ENCODE measurements at regions of chr19 and their contacts with region 1.

Region 1: DNA sequence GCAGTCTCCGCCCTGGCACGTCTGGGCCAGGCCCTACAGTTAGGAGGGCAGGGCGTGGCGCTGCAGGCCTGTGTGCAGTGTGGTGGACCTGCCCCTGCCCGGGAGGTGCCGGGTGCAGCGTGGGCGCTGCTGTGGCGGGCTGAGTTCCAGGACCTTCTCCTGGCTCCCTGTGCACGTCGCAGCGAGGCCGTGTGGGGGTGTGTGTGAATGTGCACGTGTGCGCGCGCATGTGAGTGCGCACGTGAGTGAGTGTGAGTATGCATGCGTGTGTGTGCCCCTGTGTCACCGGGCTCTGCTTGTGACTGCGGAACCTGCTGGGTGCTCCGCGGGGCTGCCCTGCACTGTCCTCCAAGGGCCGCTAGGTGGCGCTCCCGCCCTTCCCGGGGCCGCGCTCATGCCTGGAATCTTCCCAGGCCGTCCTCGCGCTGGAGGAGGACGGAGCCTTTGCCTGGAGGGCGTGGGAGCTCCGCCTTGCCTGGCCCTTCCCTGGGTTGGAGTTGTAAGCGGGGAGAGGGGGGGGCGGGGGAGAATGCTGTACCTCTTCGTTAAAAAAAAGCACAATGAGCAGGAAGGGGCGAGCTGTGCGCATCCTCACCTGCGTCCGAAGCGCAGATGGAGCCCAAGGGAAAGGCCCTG is 79.3 kb downstream of the KDM4B start:
- DNase-seq: peak in 8 of 9 donors; percentile 31 to 72 (median 52)
- ATAC-seq: peak; percentile 90
- H3K4me3 ChIP-seq: no peak overlapping the region
- H3K4me3 Mint-ChIP-seq: no peak overlapping the region
- H3K27ac ChIP-seq: no peak overlapping the region
- H3K27ac Mint-ChIP-seq: no peak overlapping the region
- H3K4me1 ChIP-seq: no peaks in the 10 kb centered on the region
- H3K4me1 Mint-ChIP-seq: peaks cover 0 to 5% (median 3%) of the 10 kb centered on the region in 7 donors
- H3K27me3 ChIP-seq: no peaks in the 10 kb centered on the region
- H3K27me3 Mint-ChIP-seq: no peaks in the 10 kb centered on the region

Region 2: DNA sequence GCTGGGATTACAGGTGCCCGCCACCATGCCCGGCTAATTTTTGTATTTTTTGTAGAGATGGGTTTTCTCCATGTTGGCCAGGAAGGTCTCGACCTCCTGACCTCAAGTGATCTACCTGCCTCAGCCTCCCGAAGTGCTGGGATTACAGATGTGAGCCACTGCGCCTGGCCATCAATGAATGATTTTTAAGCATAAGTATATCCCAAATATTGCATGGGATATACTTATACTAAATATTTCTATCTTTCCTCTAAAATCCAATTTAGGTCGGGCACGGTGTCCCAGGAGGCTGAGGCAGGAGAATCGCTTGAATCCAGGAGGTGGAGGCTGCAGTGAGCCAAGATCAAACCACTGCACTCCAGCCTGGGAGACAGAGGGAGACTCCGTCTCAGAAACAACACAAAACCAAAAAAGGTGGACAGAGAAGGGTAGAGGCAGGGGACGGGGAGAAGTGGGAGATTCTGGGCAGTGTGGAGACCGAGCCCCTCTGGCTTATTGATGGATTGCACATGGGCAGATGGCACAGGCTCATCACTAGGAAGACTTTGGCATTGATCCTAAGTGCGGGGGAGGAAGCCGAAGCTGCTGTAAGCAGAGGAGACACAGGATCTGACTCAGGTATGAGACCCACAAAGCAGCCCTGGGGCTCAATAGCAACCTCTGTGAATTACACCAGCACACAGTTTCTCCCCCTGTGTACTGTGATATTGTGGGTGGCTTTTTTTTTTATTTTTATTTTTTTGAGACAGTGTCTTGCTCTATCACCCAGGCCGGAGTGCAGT is 159.0 kb before region 1 on chr19:
- CTCF ChIA-PET with region 1: no interaction called
- POLR2A ChIA-PET with region 1: no interaction called
- intact Hi-C with region 1: no loop called
- DNase-seq: no peak
- ATAC-seq: no peak
- H3K4me3 ChIP-seq: no peak overlapping the region
- H3K4me3 Mint-ChIP-seq: no peak overlapping the region
- H3K27ac ChIP-seq: no peak overlapping the region
- H3K27ac Mint-ChIP-seq: peak overlapping the region in 1 of 9 donors; percentile 43
- H3K4me1 ChIP-seq: no peaks in the 10 kb centered on the region
- H3K4me1 Mint-ChIP-seq: no peaks in the 10 kb centered on the region
- H3K27me3 ChIP-seq: no peaks in the 10 kb centered on the region
- H3K27me3 Mint-ChIP-seq: no peaks in the 10 kb centered on the region

Region 3: DNA sequence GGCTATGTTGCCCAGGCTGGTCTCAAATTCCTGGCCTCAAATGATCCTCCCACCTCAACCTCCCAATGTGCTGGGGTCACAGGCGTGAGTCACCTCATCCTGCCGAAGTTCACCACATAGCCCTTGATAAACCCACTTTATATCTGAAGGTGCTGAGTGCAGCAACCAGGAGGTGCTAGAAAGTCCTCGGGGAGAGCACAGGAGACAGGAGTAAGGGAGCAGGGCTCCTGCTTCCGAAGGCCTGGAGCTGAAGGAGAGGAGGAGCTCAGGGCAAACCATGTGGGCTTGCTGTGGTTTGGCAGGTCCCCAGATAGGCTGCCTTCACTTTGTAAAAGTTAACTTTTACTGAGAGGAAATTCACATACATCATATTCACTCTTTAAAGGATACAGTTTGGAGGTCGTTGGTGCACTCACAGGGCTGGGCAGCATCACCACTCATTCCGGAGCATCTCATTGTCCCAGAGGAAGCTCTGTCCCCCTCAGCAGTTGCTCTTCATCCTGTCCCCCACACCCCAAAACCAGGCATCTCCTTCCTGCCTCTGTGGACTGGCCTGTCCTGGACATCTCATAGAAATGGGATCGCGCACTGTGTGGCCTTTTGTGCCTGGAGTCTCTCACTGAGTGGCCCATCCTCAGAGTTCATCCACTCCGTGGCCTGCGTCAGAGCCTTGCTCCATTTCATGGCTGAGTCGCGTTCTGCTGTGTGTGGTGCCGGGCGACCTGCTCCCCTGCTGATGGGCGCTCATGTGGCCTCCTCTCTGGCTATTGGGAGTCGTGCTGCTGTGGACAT is 29.8 kb before region 1 on chr19:
- CTCF ChIA-PET with region 1: no interaction called
- POLR2A ChIA-PET with region 1: no interaction called
- intact Hi-C with region 1: no loop called
- DNase-seq: no peak
- ATAC-seq: no peak
- H3K4me3 ChIP-seq: no peak overlapping the region
- H3K4me3 Mint-ChIP-seq: no peak overlapping the region
- H3K27ac ChIP-seq: no peak overlapping the region
- H3K27ac Mint-ChIP-seq: peak overlapping the region in 1 of 9 donors; percentile 13
- H3K4me1 ChIP-seq: no peaks in the 10 kb centered on the region
- H3K4me1 Mint-ChIP-seq: peaks cover 0 to 8% (median 4%) of the 10 kb centered on the region in 7 donors
- H3K27me3 ChIP-seq: no peaks in the 10 kb centered on the region
- H3K27me3 Mint-ChIP-seq: no peaks in the 10 kb centered on the region

Region 4: GRCh38 chr19:5138606-5139582 is 90.7 kb after region 1 on chr19:
- CTCF ChIA-PET with region 1: no interaction called
- POLR2A ChIA-PET with region 1: no interaction called
- intact Hi-C with region 1: loop called in 1 of 2 experiments (anchors 5 kb)
- DNase-seq: peak; percentile 45 to 89 (median 83)
- ATAC-seq: peak; percentile 85
- H3K4me3 ChIP-seq: peak overlapping the region; percentile 36
- H3K4me3 Mint-ChIP-seq: peak overlapping the region; percentile 66 to 90 (median 80)
- H3K27ac ChIP-seq: no peak overlapping the region
- H3K27ac Mint-ChIP-seq: peak overlapping the region; percentile 74 to 97 (median 91)
- H3K4me1 ChIP-seq: peaks cover 22 to 29% of the 10 kb centered on the region in 2 donors
- H3K4me1 Mint-ChIP-seq: peaks cover 19 to 45% (median 27%) of the 10 kb centered on the region in 7 donors
- H3K27me3 ChIP-seq: no peaks in the 10 kb centered on the region
- H3K27me3 Mint-ChIP-seq: peaks cover 0 to 7% (median 0%) of the 10 kb centered on the region in 5 donors

Region 5: DNA sequence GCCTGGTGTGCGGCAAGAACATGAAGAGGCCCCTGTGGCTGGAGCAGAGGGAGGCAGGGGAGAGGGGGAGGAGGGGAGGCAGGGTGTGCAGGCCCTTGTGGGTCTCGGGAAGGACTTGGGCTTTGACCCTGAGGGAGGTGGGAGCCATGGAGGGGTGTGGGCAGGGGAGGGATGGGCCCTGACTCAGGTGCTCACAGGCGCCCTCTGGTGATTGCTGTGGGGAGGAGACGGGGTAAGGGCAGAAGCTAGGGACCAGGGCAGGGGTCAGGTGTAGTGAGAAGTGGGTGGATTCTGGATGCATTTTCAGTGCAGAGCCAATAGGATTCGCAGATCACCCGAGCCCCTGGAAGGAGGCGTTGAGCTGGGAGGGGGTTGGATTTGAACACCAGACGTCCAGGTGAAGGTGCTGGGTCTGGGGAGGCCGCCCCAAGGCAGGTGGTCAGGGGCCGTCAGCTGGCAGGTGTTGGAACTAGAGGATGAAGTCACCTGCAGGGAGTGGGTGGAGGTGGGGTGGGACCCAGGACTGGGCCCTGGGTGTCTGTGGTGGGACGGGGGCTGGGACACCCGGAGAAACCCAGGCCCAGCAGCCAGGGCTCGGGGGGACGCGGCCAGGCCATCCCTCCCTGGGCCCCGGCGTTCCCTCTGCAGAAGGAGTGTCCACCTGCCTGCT is 106.1 kb after region 1 on chr19:
- CTCF ChIA-PET with region 1: interaction called, 3 read pairs
- POLR2A ChIA-PET with region 1: no interaction called
- intact Hi-C with region 1: loop called (anchors 1 to 5 kb)
- DNase-seq: peak in 3 of 9 donors; percentile 34 to 55 (median 40)
- ATAC-seq: peak; percentile 66
- H3K4me3 ChIP-seq: no peak overlapping the region
- H3K4me3 Mint-ChIP-seq: no peak overlapping the region
- H3K27ac ChIP-seq: no peak overlapping the region
- H3K27ac Mint-ChIP-seq: no peak overlapping the region
- H3K4me1 ChIP-seq: no peaks in the 10 kb centered on the region
- H3K4me1 Mint-ChIP-seq: peaks cover 0 to 2% (median 0%) of the 10 kb centered on the region in 7 donors
- H3K27me3 ChIP-seq: no peaks in the 10 kb centered on the region
- H3K27me3 Mint-ChIP-seq: no peaks in the 10 kb centered on the region

Region 6: DNA sequence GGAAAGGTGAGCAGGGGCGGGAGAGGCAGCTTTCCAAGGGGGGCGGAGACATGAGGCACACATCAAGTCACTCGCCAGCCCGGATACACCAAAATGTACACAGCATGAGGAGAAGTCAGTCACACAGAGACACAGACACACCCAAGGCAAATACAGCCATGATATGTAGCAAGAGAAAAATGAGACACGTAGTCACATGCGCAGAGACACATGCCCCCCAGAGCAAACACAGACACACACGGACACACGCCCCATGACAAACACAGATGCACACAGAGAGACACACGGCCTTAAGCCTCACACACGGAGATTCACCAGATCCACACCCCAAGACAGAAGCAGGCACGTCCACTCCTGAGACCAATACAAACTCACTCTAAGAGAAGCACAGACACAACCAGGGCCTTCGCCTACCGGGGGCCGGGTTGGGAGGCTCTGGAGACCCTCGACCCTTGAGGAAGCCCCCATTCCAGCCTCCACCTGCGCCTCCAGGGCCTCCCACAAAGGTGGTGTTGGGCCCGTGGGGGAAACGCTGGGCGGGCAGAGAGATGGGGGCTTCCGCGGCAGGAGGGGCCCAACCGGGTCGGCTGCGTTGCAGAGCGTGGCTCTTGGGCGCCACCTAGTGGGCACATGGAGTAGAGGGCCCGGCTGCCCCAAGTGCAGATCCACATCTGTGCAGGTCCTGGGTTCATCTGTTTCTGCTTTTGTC is 529.7 kb after region 1 on chr19:
- CTCF ChIA-PET with region 1: no interaction called
- POLR2A ChIA-PET with region 1: no interaction called
- intact Hi-C with region 1: loop called in 1 of 2 experiments (anchors 5 kb)
- DNase-seq: peak; percentile 41 to 80 (median 65)
- ATAC-seq: peak; percentile 95
- H3K4me3 ChIP-seq: no peak overlapping the region
- H3K4me3 Mint-ChIP-seq: peak overlapping the region in 4 of 10 donors; percentile 6 to 33 (median 16)
- H3K27ac ChIP-seq: no peak overlapping the region
- H3K27ac Mint-ChIP-seq: peak overlapping the region in 3 of 9 donors; percentile 21 to 30 (median 25)
- H3K4me1 ChIP-seq: peaks cover 0 to 5% of the 10 kb centered on the region in 2 donors
- H3K4me1 Mint-ChIP-seq: peaks cover 4 to 10% (median 7%) of the 10 kb centered on the region in 7 donors
- H3K27me3 ChIP-seq: no peaks in the 10 kb centered on the region
- H3K27me3 Mint-ChIP-seq: no peaks in the 10 kb centered on the region

Measured in naive thymus-derived CD4-positive, alpha-beta T cell (primary cell).